Colonic mucosa (tissue), 4 donors: ENCODE measurements at regions of chr13 and their contacts with region 1.

Region 1: GRCh38 chr13:98033277-98034247 is 80.1 kb downstream of the IPO5 start:
- DNase-seq: no peak
- H3K4me3 ChIP-seq: no peak overlapping the region
- H3K27ac ChIP-seq: no peak overlapping the region
- H3K4me1 ChIP-seq: no peaks in the 10 kb centered on the region
- H3K27me3 ChIP-seq: no peaks in the 10 kb centered on the region
- CTCF ChIP-seq: no peak

Region 2: DNA sequence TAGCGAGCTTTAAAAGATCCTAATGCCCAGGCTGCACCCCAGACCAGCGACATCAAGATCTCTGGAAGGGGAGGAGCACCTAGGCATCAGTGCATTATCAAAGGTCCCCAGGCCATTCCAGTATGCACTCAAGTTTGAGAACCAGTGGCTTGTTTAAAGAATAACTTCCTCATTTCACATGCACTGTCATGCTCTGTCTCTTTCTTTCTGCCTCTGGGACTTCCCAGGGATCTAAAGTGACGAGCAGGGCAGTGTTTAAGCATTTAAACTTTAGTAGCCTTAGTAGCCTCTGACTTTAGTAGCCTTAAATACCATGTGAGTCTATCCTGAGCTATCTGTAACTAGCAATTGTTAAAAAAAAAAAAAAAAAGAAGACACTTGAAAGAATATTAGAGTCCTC is 100.4 kb after region 1 on chr13:
- intact Hi-C with region 1: loop called (anchors 10 kb)
- DNase-seq: no peak
- H3K4me3 ChIP-seq: no peak overlapping the region
- H3K27ac ChIP-seq: no peak overlapping the region
- H3K4me1 ChIP-seq: no peaks in the 10 kb centered on the region
- H3K27me3 ChIP-seq: no peaks in the 10 kb centered on the region
- CTCF ChIP-seq: no peak

Region 3: GRCh38 chr13:98429977-98430736 is 396.6 kb after region 1 on chr13:
- intact Hi-C with region 1: loop called (anchors 10 kb)
- DNase-seq: no peak
- H3K4me3 ChIP-seq: no peak overlapping the region
- H3K27ac ChIP-seq: no peak overlapping the region
- H3K4me1 ChIP-seq: peaks cover 3% of the 10 kb centered on the region
- H3K27me3 ChIP-seq: no peaks in the 10 kb centered on the region
- CTCF ChIP-seq: no peak